Left lung (tissue), 14 donors: ENCODE measurements at regions of chr9 and their contacts with region 1.

Region 1: DNA sequence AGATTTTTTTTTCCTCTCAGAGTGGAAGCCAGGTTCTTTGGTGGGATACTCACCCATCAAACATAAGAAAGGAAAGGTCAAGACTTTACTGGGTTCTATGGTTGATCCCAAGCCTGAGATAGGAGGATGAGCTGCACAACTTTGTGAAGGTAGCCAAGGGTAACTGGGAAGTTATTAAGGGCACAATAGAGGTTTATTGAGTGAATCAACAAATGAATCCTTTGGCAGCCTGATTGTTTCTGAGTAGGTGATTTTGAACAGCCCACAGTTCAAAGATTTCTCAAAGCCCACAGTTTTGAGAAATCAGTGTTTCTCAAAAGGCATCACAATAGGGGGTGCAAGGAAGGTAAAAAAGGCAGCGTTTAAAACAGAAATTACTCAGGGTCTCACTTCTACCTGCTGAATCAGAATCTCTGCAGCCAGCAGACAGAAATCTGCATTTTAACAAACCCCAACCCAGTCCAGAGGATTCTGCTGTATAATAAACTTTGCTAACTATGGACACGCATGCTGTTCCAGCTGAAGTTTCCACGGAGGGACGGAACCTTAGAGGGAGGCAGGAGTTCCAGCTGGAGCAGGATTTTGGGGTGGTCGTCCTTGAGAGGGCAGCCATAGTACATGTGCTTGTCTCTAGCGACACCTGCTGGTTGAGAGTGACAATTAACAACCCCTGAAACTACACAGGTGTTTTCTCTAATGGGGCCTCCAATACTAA is 32.7 kb upstream of the FSD1L start:
- DNase-seq: peak in 3 of 4 donors; percentile 38 to 78 (median 62)
- ATAC-seq: peak; percentile 83
- H3K4me3 ChIP-seq: no peak overlapping the region
- H3K27ac ChIP-seq: no peak overlapping the region
- H3K4me1 ChIP-seq: peaks cover 0 to 14% of the 10 kb centered on the region in 2 donors
- H3K27me3 ChIP-seq: no peaks in the 10 kb centered on the region
- CTCF ChIP-seq: peak; percentile 76 to 84

Region 2: GRCh38 chr9:104863180-104863883 is 551.8 kb before region 1 on chr9:
- intact Hi-C with region 1: loop called in 1 of 2 experiments (anchors 10 kb)
- DNase-seq: peak in 2 of 4 donors; percentile 50 to 72
- ATAC-seq: peak; percentile 71
- H3K4me3 ChIP-seq: no peak overlapping the region
- H3K27ac ChIP-seq: no peak overlapping the region
- H3K4me1 ChIP-seq: peaks cover 10 to 76% of the 10 kb centered on the region in 2 donors
- H3K27me3 ChIP-seq: no peaks in the 10 kb centered on the region
- CTCF ChIP-seq: peak; percentile 55 to 72

Region 3: GRCh38 chr9:105150991-105151685 is 264.0 kb before region 1 on chr9:
- intact Hi-C with region 1: no loop called
- DNase-seq: no peak
- ATAC-seq: peak; percentile 81
- H3K4me3 ChIP-seq: no peak overlapping the region
- H3K27ac ChIP-seq: no peak overlapping the region
- H3K4me1 ChIP-seq: peaks cover 0 to 22% of the 10 kb centered on the region in 2 donors
- H3K27me3 ChIP-seq: no peaks in the 10 kb centered on the region
- CTCF ChIP-seq: no peak

Region 4: GRCh38 chr9:105168870-105169319 is 246.2 kb before region 1 on chr9:
- intact Hi-C with region 1: loop called in 1 of 2 experiments (anchors 10 kb)
- DNase-seq: peak in 2 of 4 donors; percentile 86 to 94
- ATAC-seq: peak; percentile 21
- H3K4me3 ChIP-seq: no peak overlapping the region
- H3K27ac ChIP-seq: no peak overlapping the region
- H3K4me1 ChIP-seq: no peaks in the 10 kb centered on the region
- H3K27me3 ChIP-seq: no peaks in the 10 kb centered on the region
- CTCF ChIP-seq: no peak

Region 5: GRCh38 chr9:105341434-105342144 is 73.5 kb before region 1 on chr9:
- intact Hi-C with region 1: no loop called
- DNase-seq: no peak
- ATAC-seq: peak; percentile 79
- H3K4me3 ChIP-seq: no peak overlapping the region
- H3K27ac ChIP-seq: peak overlapping the region in 1 of 2 donors; percentile 6
- H3K4me1 ChIP-seq: peaks cover 0 to 11% of the 10 kb centered on the region in 2 donors
- H3K27me3 ChIP-seq: no peaks in the 10 kb centered on the region
- CTCF ChIP-seq: no peak

Region 6: DNA sequence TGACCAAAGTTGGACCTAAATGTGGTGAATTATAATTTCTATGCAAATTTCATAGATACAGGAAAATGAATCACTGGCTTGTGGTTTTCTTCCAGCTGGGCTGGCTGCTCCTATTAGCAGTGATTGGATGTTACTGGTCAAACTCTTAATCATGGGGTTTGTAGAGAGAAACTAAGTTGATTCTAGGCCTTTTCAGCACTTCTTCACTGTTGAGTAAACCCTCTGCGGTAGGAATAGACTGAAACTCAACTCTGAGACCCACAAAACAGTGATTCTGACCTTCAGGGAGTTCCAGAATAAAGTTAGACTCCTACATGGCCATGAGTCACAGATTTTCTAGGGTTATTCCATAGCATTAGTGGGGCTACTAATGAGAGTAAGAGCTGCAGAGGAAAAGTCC is 94.9 kb after region 1 on chr9:
- intact Hi-C with region 1: no loop called
- DNase-seq: no peak
- ATAC-seq: peak; percentile 63
- H3K4me3 ChIP-seq: no peak overlapping the region
- H3K27ac ChIP-seq: no peak overlapping the region
- H3K4me1 ChIP-seq: peaks cover 0 to 22% of the 10 kb centered on the region in 2 donors
- H3K27me3 ChIP-seq: no peaks in the 10 kb centered on the region
- CTCF ChIP-seq: no peak